Activated T-helper 1 cell treated with anti-CD3 and anti-CD28 coated beads, Interleukin-12 subunit alpha, Interleukin-12 subunit beta, Interleukin-2, Interleukin-4 antibody, amounts not matched to agents 30 ng/mL and 10 ng/mL and 1 ng/mL, durations not matched to agents 14 hours and 24 hours and 36 hours (primary cell): ENCODE measurements at regions of chr20 and their contacts with region 1.

Region 1: DNA sequence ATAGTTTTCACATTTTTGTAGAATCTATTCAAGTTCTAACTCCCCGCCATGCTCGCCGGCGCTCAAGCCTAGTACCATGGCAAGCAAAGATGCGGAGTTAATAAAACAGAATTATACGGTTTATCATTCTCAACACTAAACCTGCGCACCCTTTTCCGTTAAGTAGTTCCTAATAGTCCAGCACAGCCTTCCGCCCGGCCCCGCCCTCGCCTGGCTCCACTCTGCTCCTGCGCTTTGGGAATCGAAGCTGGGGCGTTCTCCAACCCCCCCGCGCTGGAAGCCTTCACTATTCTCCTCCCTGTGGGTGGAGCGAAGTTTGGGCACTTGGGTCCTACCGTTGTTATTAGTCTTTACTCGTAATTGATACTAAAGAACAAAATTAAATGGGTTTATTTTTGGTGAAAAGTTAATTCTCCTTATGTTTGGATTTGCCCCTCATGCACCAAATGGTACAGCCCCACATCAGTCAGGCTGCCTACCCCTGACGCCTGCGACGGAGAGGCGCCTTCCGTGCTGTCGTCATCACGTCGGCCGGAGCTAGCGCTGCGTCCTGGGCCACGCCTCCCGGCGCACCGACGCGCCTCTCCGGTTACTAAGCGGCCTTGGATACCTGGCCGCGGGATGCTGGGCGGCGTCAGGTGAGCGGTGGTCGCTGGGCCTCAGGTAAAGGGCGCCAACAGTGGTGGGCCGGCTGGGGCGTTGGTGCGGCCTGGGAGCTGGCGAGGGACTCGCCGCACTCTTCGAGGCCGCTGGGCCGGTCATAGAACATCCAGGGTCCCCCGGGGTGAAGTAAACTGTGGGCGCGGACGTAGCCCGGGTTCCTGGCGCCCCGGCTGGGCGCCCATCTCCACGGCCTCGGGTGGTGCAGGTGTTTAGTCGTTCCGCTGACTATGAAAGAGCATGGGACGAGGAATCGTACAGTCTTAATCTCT is at the start of gene IFT52:
- DNase-seq: peak; percentile 85
- H3K4me3 Mint-ChIP-seq: peak within 1 kb of the TSS; percentile 91
- H3K27ac Mint-ChIP-seq: peak within 1 kb of the TSS; percentile 95
- H3K4me1 Mint-ChIP-seq: peaks cover 22% of the 10 kb centered on the region
- H3K27me3 Mint-ChIP-seq: peaks cover 2% of the 10 kb centered on the region
- total RNA-seq, gene IFT52: 18.3 and 18.7 TPM in 2 replicates

Region 2: DNA sequence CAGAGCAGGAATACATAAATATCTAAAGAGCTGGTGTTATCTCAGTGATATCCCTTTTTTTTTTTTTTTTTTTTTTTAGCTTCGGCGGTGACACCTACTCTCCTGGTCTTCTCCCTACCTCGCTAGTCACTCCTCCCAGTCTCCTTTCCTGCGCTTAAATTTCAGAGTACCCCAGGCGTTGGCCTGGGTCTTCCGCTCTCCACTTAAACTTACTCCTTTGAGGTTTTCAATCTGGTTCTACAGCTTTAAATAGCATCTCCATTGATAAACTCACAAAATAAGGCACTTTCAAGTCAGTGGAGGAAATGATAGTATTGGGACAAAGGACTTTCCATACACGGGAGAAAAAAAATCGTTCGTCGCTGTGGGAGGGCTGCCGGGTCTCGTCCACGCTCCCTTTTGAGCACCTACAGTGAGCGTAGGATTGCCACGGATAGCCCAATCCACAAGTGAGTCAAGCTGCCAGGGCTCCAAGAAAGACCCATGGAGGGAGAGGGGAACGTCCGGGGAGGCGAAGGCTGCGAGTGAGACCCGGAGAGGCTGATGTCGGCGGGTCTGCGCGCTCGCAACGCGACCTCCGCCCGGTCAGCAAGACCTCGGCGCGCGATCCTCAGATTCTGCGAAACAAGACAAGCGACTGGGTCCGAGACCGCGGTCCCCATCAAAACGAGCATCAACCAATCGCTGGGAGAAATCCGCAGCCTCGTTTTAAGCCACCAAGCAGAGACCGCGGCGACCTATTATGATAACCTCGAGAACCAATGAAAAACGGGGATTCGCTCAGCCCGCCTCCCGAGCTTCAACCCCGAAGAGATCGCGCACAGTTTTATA is 133.6 kb before region 1 on chr20:
- intact Hi-C with region 1: loop called (anchors 1 kb)
- DNase-seq: peak; percentile 83
- H3K4me3 Mint-ChIP-seq: peak overlapping the region; percentile 88
- H3K27ac Mint-ChIP-seq: peak overlapping the region; percentile 100
- H3K4me1 Mint-ChIP-seq: peaks cover 34% of the 10 kb centered on the region
- H3K27me3 Mint-ChIP-seq: peaks cover 17% of the 10 kb centered on the region

Region 3: GRCh38 chr20:43514062-43514999 is 76.3 kb before region 1 on chr20:
- intact Hi-C with region 1: loop called (anchors 1 kb)
- DNase-seq: peak; percentile 88
- H3K4me3 Mint-ChIP-seq: peak overlapping the region; percentile 95
- H3K27ac Mint-ChIP-seq: peak overlapping the region; percentile 91
- H3K4me1 Mint-ChIP-seq: no peaks in the 10 kb centered on the region
- H3K27me3 Mint-ChIP-seq: peaks cover 4% of the 10 kb centered on the region

Region 4: GRCh38 chr20:43691928-43692524 is 101.4 kb after region 1 on chr20:
- intact Hi-C with region 1: loop called (anchors 1 kb)
- DNase-seq: peak; percentile 29
- H3K4me3 Mint-ChIP-seq: no peak overlapping the region
- H3K27ac Mint-ChIP-seq: no peak overlapping the region
- H3K4me1 Mint-ChIP-seq: peaks cover 11% of the 10 kb centered on the region
- H3K27me3 Mint-ChIP-seq: no peaks in the 10 kb centered on the region

Region 5: GRCh38 chr20:44080646-44081267 is 490.1 kb after region 1 on chr20:
- intact Hi-C with region 1: loop called (anchors 1 kb)
- DNase-seq: peak; percentile 55
- H3K4me3 Mint-ChIP-seq: no peak overlapping the region
- H3K27ac Mint-ChIP-seq: no peak overlapping the region
- H3K4me1 Mint-ChIP-seq: peaks cover 31% of the 10 kb centered on the region
- H3K27me3 Mint-ChIP-seq: peaks cover 4% of the 10 kb centered on the region

Region 6: DNA sequence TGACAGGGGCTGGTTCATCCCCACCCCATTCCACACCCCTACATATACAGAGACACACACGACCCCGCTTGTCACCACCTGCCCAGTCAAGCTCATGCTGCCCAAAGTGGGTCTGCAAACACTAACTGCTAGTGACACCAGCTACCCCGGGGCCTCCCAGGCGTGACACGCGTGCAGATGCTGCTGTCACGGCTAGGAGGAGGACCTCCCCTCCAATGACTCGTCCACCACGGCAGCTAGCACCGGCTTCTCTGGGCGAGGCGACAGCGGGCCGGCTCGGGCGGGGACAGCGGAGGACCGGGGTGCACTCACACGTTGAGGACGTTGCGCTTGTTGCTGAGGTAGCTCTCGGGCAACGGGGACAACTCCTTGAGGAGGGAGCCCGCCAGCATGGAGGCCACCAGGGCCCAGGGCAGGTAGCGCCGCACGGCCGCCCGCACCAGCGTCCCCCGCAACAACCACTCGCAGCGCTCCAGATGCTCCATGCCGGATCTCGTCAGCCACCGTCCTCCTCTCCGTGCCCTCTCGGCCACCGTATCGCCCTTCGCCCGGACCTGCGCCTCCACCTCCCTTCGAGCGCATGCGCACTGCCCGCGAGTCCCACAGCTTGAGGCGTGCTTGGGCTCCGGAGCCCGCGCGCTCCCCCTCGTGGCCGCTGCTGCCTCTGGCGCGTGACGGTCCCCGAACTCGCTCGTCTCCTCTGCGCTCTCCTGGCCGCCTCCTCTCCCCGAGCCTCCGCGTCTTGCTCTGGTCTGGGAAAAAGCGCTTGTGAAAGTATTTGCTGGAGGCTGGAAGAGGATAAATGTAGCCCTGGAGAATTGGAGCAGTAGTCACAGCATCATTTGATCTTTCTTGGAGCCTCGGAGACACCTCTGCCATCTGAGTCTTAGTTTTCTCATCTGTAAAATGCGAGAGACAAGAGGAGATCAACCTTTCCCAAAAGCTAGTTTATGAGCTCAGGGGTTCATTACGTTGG is 720.3 kb after region 1 on chr20 and contains the start of gene FITM2:
- intact Hi-C with region 1: loop called (anchors 2 kb)
- DNase-seq: peak; percentile 97
- H3K4me3 Mint-ChIP-seq: peak within 1 kb of the TSS; percentile 86
- H3K27ac Mint-ChIP-seq: peak within 1 kb of the TSS; percentile 87
- H3K4me1 Mint-ChIP-seq: peaks cover 18% of the 10 kb centered on the region
- H3K27me3 Mint-ChIP-seq: peaks cover 4% of the 10 kb centered on the region
- total RNA-seq, gene FITM2: 2.2 TPM in 2 replicates

Region 7: GRCh38 chr20:44586289-44586911 is 995.7 kb after region 1 on chr20:
- intact Hi-C with region 1: no loop called
- DNase-seq: no peak
- H3K4me3 Mint-ChIP-seq: no peak overlapping the region
- H3K27ac Mint-ChIP-seq: no peak overlapping the region
- H3K4me1 Mint-ChIP-seq: peaks cover 18% of the 10 kb centered on the region
- H3K27me3 Mint-ChIP-seq: no peaks in the 10 kb centered on the region